Activated T-helper 2 cell treated with anti-CD3 and anti-CD28 coated beads, Interferon-gamma antibody, Interleukin-2, Interleukin-4, amounts not matched to agents 10 μg/mL and 5 μg/mL and 100 μg/mL, durations not matched to agents 14 hours and 24 hours and 36 hours (primary cell): ENCODE measurements at regions of chr12 and their contacts with region 1.

Region 1: GRCh38 chr12:92505254-92506231 is 197.2 kb upstream of the PLEKHG7 start:
- DNase-seq: peak; percentile 36
- H3K4me3 Mint-ChIP-seq: peak overlapping the region; percentile 70
- H3K27ac Mint-ChIP-seq: peak overlapping the region; percentile 89
- H3K4me1 Mint-ChIP-seq: peaks cover 47% of the 10 kb centered on the region
- H3K27me3 Mint-ChIP-seq: no peaks in the 10 kb centered on the region

Region 2: DNA sequence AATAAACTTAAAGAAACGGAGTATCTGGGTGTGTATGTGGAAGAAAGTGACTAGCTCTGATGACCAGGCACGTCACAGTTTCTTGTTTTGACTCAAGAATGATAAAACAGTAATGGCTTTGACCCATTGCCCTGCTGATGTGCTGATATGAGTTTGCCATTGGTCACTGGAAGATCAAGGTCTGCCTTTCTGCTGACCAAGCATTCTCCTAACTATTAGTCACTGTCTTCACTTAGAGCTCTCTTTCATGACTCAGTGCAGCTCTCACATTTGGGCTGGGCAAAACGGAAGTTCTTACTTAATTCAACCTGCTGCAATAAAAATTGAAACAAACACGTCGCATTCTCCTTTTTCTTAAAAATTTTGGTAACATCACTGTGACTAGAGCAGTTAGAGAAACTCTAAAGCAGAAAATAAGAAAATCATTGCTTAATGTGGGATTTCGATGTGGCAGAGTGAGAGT is 726.6 kb before region 1 on chr12:
- intact Hi-C with region 1: loop called (anchors 10 kb)
- DNase-seq: peak; percentile 17
- H3K4me3 Mint-ChIP-seq: peak overlapping the region; percentile 62
- H3K27ac Mint-ChIP-seq: peak overlapping the region; percentile 70
- H3K4me1 Mint-ChIP-seq: peaks cover 24% of the 10 kb centered on the region
- H3K27me3 Mint-ChIP-seq: peaks cover 4% of the 10 kb centered on the region

Region 3: GRCh38 chr12:92324849-92325500 is 180.6 kb before region 1 on chr12:
- intact Hi-C with region 1: no loop called
- DNase-seq: no peak
- H3K4me3 Mint-ChIP-seq: no peak overlapping the region
- H3K27ac Mint-ChIP-seq: no peak overlapping the region
- H3K4me1 Mint-ChIP-seq: peaks cover 13% of the 10 kb centered on the region
- H3K27me3 Mint-ChIP-seq: no peaks in the 10 kb centered on the region

Region 4: GRCh38 chr12:92469837-92470236 is 35.7 kb before region 1 on chr12:
- intact Hi-C with region 1: loop called (anchors 1 kb)
- DNase-seq: no peak
- H3K4me3 Mint-ChIP-seq: no peak overlapping the region
- H3K27ac Mint-ChIP-seq: no peak overlapping the region
- H3K4me1 Mint-ChIP-seq: peaks cover 23% of the 10 kb centered on the region
- H3K27me3 Mint-ChIP-seq: no peaks in the 10 kb centered on the region

Region 5: GRCh38 chr12:92539113-92539749 is 33.7 kb after region 1 on chr12:
- intact Hi-C with region 1: loop called (anchors 1 kb)
- DNase-seq: no peak
- H3K4me3 Mint-ChIP-seq: no peak overlapping the region
- H3K27ac Mint-ChIP-seq: peak overlapping the region; percentile 93
- H3K4me1 Mint-ChIP-seq: peaks cover 60% of the 10 kb centered on the region
- H3K27me3 Mint-ChIP-seq: no peaks in the 10 kb centered on the region

Region 6: GRCh38 chr12:92570056-92570753 is 64.7 kb after region 1 on chr12:
- intact Hi-C with region 1: loop called (anchors 1 kb)
- DNase-seq: no peak
- H3K4me3 Mint-ChIP-seq: no peak overlapping the region
- H3K27ac Mint-ChIP-seq: no peak overlapping the region
- H3K4me1 Mint-ChIP-seq: peaks cover 20% of the 10 kb centered on the region
- H3K27me3 Mint-ChIP-seq: no peaks in the 10 kb centered on the region